GM12878 (cell line): ENCODE measurements at regions of chr6 and their contacts with region 1.

Region 1: DNA sequence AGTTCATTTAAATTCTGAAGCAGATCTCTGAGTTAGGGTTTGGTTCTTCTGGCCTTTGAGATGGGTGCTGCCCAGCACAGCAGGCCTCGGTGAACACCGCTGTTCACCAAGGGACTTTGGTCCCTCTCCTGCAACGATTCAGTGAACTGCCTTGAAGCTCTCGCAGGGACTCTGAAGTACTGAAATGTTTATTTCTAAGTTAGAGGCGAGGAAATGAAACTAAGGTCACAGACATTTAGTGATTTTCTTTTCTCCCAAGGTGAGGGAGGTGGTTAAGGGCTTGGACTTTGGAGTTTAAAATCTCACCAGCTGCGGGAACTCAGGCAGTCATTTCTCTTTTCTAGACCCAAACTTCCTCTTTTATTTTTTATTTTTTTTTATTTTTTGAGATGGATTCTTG is 26.2 kb downstream of the E2F3 start:
- DNase-seq: peak; percentile 73
- ATAC-seq: peak; percentile 95
- H3K4me3 ChIP-seq: 0 out of 2 replicates have a peak overlapping the region, but pooled peaks have one; percentile 13
- H3K27ac ChIP-seq: peak overlapping the region; percentile 69
- H3K4me1 ChIP-seq: peaks cover 27% of the 10 kb centered on the region
- H3K27me3 ChIP-seq: no peaks in the 10 kb centered on the region
- CTCF ChIP-seq: no peak
- EP300 ChIP-seq: peak in 1 of 2 experiments; percentile 56; a peak in 1 of 4 replicates
- POLR2A ChIP-seq: no peak
- RAD21 ChIP-seq: no peak

Region 2: DNA sequence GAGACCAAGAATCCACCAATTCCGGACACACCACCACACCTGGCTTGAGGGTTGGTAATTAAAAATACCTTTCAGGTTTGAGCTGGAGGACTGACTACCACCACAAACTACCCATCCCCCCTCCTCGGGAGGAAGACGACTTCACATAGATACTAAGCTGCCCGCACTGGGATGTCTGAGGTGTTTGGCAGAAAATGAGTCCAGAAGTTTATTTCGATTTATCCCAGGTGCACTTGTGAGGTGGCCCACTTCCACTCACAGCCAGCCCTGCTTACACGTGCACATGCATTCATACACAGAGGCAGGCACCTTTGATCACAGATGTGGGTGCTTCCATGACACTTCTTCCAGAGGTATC is 403.6 kb before region 1 on chr6:
- CTCF ChIA-PET with region 1: no interaction called
- POLR2A ChIA-PET with region 1: no interaction called
- RAD21 ChIA-PET with region 1: no interaction called
- SMC1A ChIA-PET with region 1: no interaction called
- in situ Hi-C with region 1: no loop called
- intact Hi-C with region 1: no loop called
- DNase-seq: no peak
- ATAC-seq: no peak
- H3K4me3 ChIP-seq: no peak overlapping the region; the same call in 1 of the 2 replicates
- H3K27ac ChIP-seq: no peak overlapping the region
- H3K4me1 ChIP-seq: peaks cover 9% of the 10 kb centered on the region
- H3K27me3 ChIP-seq: peaks cover 0 to 5% of the 10 kb centered on the region in 2 experiments; a peak in 1 of 4 replicates
- CTCF ChIP-seq: no peak
- EP300 ChIP-seq: no peak
- POLR2A ChIP-seq: no peak
- RAD21 ChIP-seq: no peak

Region 3: GRCh38 chr6:20409427-20409971 is 18.4 kb before region 1 on chr6:
- CTCF ChIA-PET with region 1: interaction called, 13 read pairs
- POLR2A ChIA-PET with region 1: interaction called, 4 read pairs
- RAD21 ChIA-PET with region 1: interaction called, 18 read pairs
- SMC1A ChIA-PET with region 1: interaction called, 17 read pairs
- in situ Hi-C with region 1: no loop called
- intact Hi-C with region 1: loop called (anchors 1 kb)
- DNase-seq: peak; percentile 75
- ATAC-seq: peak; percentile 92
- H3K4me3 ChIP-seq: peak overlapping the region; percentile 56
- H3K27ac ChIP-seq: peak overlapping the region; percentile 82
- H3K4me1 ChIP-seq: peaks cover 29% of the 10 kb centered on the region
- H3K27me3 ChIP-seq: no peaks in the 10 kb centered on the region
- CTCF ChIP-seq: 0 out of 6 replicates have a peak, but pooled peaks of 1 of the 3 experiments have one; percentile 3
- EP300 ChIP-seq: 0 out of 4 replicates have a peak, but pooled peaks of 1 of the 2 experiments have one; percentile 41
- POLR2A ChIP-seq: no peak
- RAD21 ChIP-seq: no peak

Region 4: GRCh38 chr6:20417819-20418218 is 10.0 kb before region 1 on chr6:
- CTCF ChIA-PET with region 1: no interaction called
- POLR2A ChIA-PET with region 1: interaction called, 3 read pairs
- RAD21 ChIA-PET with region 1: no interaction called
- SMC1A ChIA-PET with region 1: interaction called, 10 read pairs
- in situ Hi-C with region 1: no loop called
- intact Hi-C with region 1: no loop called
- DNase-seq: no peak
- ATAC-seq: peak; percentile 52
- H3K4me3 ChIP-seq: no peak overlapping the region
- H3K27ac ChIP-seq: peak overlapping the region; percentile 6; the same call in 1 of the 2 replicates
- H3K4me1 ChIP-seq: peaks cover 20% of the 10 kb centered on the region
- H3K27me3 ChIP-seq: no peaks in the 10 kb centered on the region
- CTCF ChIP-seq: no peak
- EP300 ChIP-seq: no peak
- POLR2A ChIP-seq: no peak
- RAD21 ChIP-seq: no peak

Region 5: DNA sequence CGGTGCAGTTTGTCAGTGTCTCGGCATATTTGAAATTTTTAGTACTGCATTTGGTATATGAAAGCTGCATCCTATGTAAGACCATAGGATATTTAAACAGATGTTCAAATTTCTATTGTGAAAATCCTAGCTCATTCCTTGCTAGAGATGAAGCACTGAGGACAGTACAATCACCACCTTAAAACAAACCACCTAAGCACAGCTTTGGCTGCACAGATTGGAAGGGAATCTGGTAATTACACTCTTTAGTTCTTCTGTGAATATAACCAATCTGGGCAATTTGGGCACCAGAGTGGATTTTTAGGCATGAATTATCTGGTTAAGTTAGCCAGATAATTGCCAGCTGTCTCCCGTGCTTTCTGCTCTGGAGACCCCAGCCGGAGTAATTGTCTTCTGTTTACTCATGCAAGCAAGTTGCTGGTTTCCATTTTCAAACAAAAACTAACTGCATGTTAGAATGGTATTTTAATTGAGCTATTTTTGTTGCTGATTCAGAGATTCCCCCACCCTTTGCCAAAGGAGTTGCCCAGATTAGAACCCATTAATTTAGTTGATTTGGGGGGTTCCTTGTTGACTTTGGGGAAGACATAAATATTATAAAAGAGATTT is 10.7 kb after region 1 on chr6:
- CTCF ChIA-PET with region 1: no interaction called
- POLR2A ChIA-PET with region 1: interaction called, 3 read pairs
- RAD21 ChIA-PET with region 1: no interaction called
- SMC1A ChIA-PET with region 1: interaction called, 11 read pairs
- in situ Hi-C with region 1: no loop called
- intact Hi-C with region 1: no loop called
- DNase-seq: no peak
- ATAC-seq: no peak
- H3K4me3 ChIP-seq: no peak overlapping the region
- H3K27ac ChIP-seq: no peak overlapping the region
- H3K4me1 ChIP-seq: no peaks in the 10 kb centered on the region; the same call in 1 of the 2 replicates
- H3K27me3 ChIP-seq: no peaks in the 10 kb centered on the region
- CTCF ChIP-seq: no peak
- EP300 ChIP-seq: no peak
- POLR2A ChIP-seq: no peak
- RAD21 ChIP-seq: no peak

Region 6: GRCh38 chr6:20467437-20467836 is 39.6 kb after region 1 on chr6:
- CTCF ChIA-PET with region 1: interaction called, 3 read pairs
- POLR2A ChIA-PET with region 1: interaction called, 3 read pairs
- RAD21 ChIA-PET with region 1: no interaction called
- SMC1A ChIA-PET with region 1: interaction called, 3 read pairs
- in situ Hi-C with region 1: no loop called
- intact Hi-C with region 1: loop called (anchors 5 kb)
- DNase-seq: peak; percentile 50
- ATAC-seq: peak; percentile 63
- H3K4me3 ChIP-seq: no peak overlapping the region
- H3K27ac ChIP-seq: peak overlapping the region; percentile 50
- H3K4me1 ChIP-seq: peaks cover 46% of the 10 kb centered on the region
- H3K27me3 ChIP-seq: no peaks in the 10 kb centered on the region
- CTCF ChIP-seq: no peak
- EP300 ChIP-seq: no peak
- POLR2A ChIP-seq: no peak
- RAD21 ChIP-seq: no peak